ENCODE measurements at regions of chr1 and their contacts with region 1.

Region 1: GRCh38 chr1:218164111-218164929 is 120.8 kb upstream of the RRP15 start:
- DNase-seq: peak; percentile 5
- H3K4me3 Mint-ChIP-seq: peak overlapping the region; percentile 53
- H3K27ac Mint-ChIP-seq: no peak overlapping the region
- H3K4me1 Mint-ChIP-seq: peaks cover 15% of the 10 kb centered on the region
- H3K27me3 Mint-ChIP-seq: peaks cover 58% of the 10 kb centered on the region

Region 2: DNA sequence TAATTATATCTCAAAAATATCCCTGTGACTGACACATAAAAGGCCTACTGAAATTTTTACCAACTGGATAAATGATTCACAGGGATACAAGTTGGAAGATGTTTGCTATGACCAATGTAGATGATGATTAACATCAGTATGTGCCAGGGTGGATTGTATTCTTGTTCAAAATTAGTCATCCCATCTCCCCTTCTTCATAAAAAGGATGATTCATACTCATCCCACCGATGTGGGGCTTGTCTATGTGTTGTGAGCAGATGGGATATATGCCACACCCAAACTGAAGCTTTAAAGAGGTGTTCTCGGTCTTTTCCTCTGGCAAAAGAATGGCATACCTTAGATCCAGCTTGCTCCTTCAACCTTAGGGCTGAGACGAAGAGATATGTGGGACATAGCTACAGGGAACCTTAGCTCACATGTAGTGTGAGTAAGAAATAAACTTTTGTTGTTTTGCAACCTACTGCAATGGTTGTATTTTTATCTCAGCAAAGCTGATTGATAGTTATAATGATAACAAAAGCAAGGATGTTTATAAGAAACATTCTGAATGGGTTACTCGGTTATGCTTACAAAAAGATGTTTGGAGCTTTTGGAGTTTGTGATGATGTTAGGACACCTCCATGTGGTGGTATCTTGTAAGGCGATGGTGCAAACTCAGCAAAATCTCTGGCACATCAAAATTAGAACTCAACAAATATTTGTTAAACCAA is 503.8 kb before region 1 on chr1:
- CTCF ChIA-PET with region 1: no interaction called
- intact Hi-C with region 1: no loop called
- DNase-seq: no peak
- H3K4me3 Mint-ChIP-seq: no peak overlapping the region
- H3K27ac Mint-ChIP-seq: no peak overlapping the region
- H3K4me1 Mint-ChIP-seq: no peaks in the 10 kb centered on the region
- H3K27me3 Mint-ChIP-seq: peaks cover 7% of the 10 kb centered on the region

Region 3: DNA sequence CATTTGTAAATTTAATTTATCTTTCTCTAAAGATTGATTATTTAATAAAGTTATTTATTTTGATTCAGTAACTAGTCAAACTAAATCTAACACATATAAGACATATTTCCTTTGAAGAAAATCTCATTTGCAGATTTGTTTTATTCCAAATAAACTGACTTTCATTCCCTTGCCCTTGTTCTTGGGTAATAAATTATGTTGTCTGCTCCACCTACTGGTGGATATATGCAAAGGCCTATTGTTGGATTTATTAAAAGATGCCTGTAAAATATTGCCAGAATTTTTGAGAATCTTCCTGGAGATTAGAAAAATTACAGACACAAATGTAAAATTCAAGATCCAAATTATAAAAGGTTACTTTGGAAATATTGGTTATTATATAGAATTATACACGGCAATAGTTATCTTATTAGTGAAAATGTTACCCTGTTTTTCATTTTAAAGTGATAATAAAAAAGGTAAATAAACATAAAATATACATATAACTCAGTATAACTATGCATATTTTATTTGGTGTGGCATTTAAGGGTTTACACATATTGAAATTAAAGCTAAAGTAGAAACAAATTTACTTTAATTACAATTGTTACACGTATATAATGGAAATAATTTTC is 417.1 kb before region 1 on chr1:
- CTCF ChIA-PET with region 1: no interaction called
- intact Hi-C with region 1: loop called (anchors 10 kb)
- DNase-seq: no peak
- H3K4me3 Mint-ChIP-seq: no peak overlapping the region
- H3K27ac Mint-ChIP-seq: no peak overlapping the region
- H3K4me1 Mint-ChIP-seq: no peaks in the 10 kb centered on the region
- H3K27me3 Mint-ChIP-seq: no peaks in the 10 kb centered on the region

Measured in activated naive CD4-positive, alpha-beta T cell treated with anti-CD3 and anti-CD28 coated beads for 36 hours (primary cell).